ENCODE measurements at regions of chr16 and their contacts with region 1.

Region 1: GRCh38 chr16:85610508-85611332 is 2.4 kb upstream of the GSE1 start:
- DNase-seq: peak; percentile 86
- CTCF ChIP-seq: peak; percentile 85

Region 2: GRCh38 chr16:85420501-85421337 is 190.0 kb before region 1 on chr16:
- CTCF ChIA-PET with region 1: interaction called, 71 read pairs
- POLR2A ChIA-PET with region 1: no interaction called
- DNase-seq: peak; percentile 91
- CTCF ChIP-seq: peak; percentile 100

Region 3: DNA sequence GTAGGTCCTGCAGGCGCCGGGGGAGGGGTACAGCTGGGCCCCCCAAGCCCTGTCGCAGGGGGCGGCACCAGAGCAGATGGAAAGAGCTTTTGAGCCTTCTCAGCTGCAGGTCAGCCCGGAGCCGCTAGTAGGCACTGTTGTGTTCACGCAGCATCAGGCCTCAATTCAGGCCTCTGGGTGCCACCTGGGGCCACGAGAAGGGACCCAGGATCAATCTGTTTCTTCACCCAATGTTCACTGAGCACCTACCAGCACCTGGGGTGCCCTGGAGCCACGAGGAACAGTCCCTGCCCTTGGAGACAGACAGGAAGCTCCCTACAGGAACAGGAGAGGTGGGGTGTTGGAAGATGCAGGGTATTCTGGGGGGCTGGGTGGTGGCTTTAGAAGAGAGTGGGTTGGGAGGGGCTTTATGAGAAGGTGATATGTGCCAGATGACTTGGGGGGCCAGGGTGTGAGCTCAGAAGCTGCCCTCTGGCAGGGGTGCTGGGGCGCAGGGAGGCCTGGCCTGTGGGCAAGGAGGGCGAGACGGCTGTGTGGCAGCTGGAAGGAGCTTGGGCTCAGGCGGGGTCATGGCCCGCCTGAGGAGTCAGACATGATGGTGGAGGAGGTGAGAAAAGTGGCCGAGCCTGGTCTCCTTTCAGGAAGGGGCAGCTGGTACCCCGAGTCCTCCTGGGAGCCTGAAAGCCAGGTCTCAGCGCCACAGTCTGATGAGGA is 119.5 kb before region 1 on chr16:
- CTCF ChIA-PET with region 1: interaction called, 35 read pairs
- POLR2A ChIA-PET with region 1: no interaction called
- DNase-seq: peak; percentile 79
- CTCF ChIP-seq: peak; percentile 69

Region 4: GRCh38 chr16:85528528-85529387 is 82.0 kb before region 1 on chr16:
- CTCF ChIA-PET with region 1: interaction called, 11 read pairs
- POLR2A ChIA-PET with region 1: no interaction called
- DNase-seq: peak; percentile 62
- CTCF ChIP-seq: peak; percentile 35

Region 5: DNA sequence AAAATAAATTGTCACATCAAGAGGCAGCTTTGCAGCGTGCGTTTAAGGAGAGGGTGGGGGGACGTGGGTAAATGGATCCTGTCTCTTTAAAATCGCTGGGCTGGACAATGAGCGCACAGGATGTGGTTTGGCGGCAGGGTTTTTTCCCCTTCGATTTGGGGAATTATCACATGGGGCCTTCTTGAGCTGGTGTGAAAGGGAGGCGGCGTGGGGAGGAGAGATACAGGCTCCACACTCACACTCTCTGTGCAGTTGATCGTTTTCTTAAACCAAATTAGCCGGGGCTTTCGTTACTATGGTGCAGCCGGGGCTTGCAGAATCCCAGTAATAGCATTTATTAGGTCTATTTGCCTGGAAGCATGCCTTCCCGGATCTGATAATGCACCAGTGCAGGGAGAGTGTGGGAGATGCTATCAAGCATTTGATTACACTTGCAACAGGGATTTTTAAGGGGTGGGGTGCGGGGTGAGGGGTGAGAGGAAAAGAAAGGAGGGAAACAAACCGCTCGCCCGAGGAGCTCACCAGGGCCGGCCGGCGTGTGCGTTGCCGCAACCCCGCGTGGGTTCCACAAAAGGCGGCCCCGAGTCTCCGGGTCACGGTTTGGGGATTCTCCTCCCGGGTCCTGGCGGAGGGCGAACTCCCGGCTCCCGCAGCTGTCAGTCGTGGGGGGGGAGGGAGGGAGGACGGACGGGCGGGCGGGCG is 56.5 kb before region 1 on chr16:
- CTCF ChIA-PET with region 1: interaction called, 20 read pairs
- POLR2A ChIA-PET with region 1: interaction called, 5 read pairs
- DNase-seq: peak; percentile 89
- CTCF ChIP-seq: no peak

Region 6: GRCh38 chr16:85564277-85565051 is 46.3 kb before region 1 on chr16:
- CTCF ChIA-PET with region 1: interaction called, 25 read pairs
- POLR2A ChIA-PET with region 1: interaction called, 4 read pairs
- DNase-seq: no peak
- CTCF ChIP-seq: peak; percentile 59

Region 7: DNA sequence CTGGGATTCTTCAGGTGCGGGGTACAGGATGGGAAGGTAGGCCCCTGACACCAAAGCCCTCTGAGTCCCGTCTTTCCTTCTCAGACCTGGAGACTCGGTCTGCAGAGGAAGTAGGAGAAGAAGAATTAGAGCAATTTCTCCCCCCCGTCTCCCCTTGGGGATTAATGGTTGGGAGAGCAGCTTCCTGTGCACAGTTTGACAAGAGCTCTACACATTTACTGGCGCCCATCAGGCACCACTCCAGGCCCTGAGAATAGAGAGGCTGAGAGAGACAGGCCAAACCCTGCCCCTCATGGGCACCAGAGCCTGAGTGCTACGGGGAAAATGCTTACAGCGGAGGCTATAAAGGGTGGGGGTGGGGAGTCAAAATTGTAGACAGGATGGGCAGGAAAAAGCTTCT is 143.7 kb after region 1 on chr16:
- CTCF ChIA-PET with region 1: interaction called, 5 read pairs
- POLR2A ChIA-PET with region 1: interaction called, 10 read pairs
- DNase-seq: no peak
- CTCF ChIP-seq: no peak